Mammary epithelial cell (primary cell): ENCODE measurements at regions of chr1 and their contacts with region 1.

Region 1: GRCh38 chr1:212035123-212035834 is at the starts of genes DTL and INTS7:
- DNase-seq: peak; percentile 99
- H3K4me3 ChIP-seq: peak within 1 kb of the TSS; percentile 89 to 98 (median 95)
- H3K27ac ChIP-seq: peak within 1 kb of the TSS; percentile 86
- H3K4me1 ChIP-seq: peaks cover 30% of the 10 kb centered on the region
- H3K27me3 ChIP-seq: no peaks in the 10 kb centered on the region
- CTCF ChIP-seq: peak; percentile 77 to 84
- total RNA-seq, gene DTL: 3.2 to 24.6 TPM
- total RNA-seq, gene INTS7: 16.8 to 24.3 TPM

Region 2: DNA sequence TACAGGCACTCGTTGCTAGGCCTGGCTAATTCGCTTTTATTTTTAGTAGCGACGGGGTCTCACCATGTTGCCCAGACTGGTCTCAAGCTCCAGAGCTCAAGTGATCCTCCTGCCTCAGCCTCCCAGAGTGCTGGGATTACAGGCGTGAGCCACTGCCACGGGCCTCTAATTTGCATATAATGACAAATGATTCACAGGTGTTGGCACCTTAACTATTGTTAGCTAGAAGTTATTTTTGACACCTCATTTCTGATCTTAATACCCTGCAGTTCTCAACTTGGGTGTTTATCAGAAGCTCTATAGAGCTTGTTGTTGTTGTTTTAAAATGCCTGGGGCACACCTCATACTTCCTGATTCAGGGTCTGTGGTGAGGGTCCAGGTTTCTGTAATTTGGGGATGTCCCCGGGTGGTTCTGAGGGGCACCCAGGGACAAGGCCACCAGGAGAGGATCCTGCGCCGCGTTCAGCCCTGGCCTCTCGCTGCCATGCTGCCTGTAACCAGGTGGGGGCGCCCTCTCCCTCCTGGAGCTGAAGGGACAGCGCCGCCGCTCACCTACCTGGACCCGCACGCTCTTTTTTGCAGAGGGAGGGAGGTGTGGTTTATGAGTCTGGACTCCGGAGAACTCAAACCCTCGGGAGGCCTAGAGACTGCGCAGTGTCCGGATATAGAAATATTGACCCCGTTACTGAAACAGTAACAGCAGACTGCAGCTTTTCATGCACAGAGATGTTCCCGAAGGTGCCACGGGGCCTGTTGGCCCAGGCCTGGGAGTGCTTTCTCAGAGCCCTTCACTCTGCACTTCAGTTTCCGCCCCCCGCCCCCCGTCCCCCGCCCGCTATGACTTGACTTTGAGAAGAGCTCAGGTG is 336.9 kb before region 1 on chr1:
- CTCF ChIA-PET with region 1: no interaction called
- dilution Hi-C with region 1: no loop called
- in situ Hi-C with region 1: loop called in 1 of 2 experiments (anchors 25 kb)
- intact Hi-C with region 1: loop called (anchors 1 kb)
- DNase-seq: peak; percentile 64
- H3K4me3 ChIP-seq: no peak overlapping the region
- H3K27ac ChIP-seq: no peak overlapping the region
- H3K4me1 ChIP-seq: peaks cover 5% of the 10 kb centered on the region
- H3K27me3 ChIP-seq: no peaks in the 10 kb centered on the region
- CTCF ChIP-seq: peak; percentile 91 to 99

Region 3: GRCh38 chr1:211830330-211831142 is 204.7 kb before region 1 on chr1 and contains the start of gene LPGAT1:
- CTCF ChIA-PET with region 1: interaction called, 5 read pairs
- dilution Hi-C with region 1: no loop called
- in situ Hi-C with region 1: no loop called
- intact Hi-C with region 1: loop called (anchors 1 kb)
- DNase-seq: peak; percentile 53
- H3K4me3 ChIP-seq: peak within 1 kb of the TSS; percentile 69 to 84 (median 75)
- H3K27ac ChIP-seq: peak within 1 kb of the TSS; percentile 44
- H3K4me1 ChIP-seq: peaks cover 15% of the 10 kb centered on the region
- H3K27me3 ChIP-seq: no peaks in the 10 kb centered on the region
- CTCF ChIP-seq: peak; percentile 19 to 59
- total RNA-seq, gene LPGAT1: 42.0 to 44.5 TPM

Region 4: GRCh38 chr1:211951856-211952255 is 83.4 kb before region 1 on chr1:
- CTCF ChIA-PET with region 1: no interaction called
- dilution Hi-C with region 1: no loop called
- in situ Hi-C with region 1: no loop called
- intact Hi-C with region 1: loop called (anchors 5 kb)
- DNase-seq: peak; percentile 95
- H3K4me3 ChIP-seq: no peak overlapping the region
- H3K27ac ChIP-seq: peak overlapping the region; percentile 70
- H3K4me1 ChIP-seq: peaks cover 18% of the 10 kb centered on the region
- H3K27me3 ChIP-seq: no peaks in the 10 kb centered on the region
- CTCF ChIP-seq: no peak

Region 5: GRCh38 chr1:212595787-212596714 is 560.8 kb after region 1 on chr1:
- CTCF ChIA-PET with region 1: no interaction called
- dilution Hi-C with region 1: no loop called
- in situ Hi-C with region 1: no loop called
- intact Hi-C with region 1: loop called (anchors 1 kb)
- DNase-seq: peak; percentile 98
- H3K4me3 ChIP-seq: peak overlapping the region; percentile 2 to 7 (median 5)
- H3K27ac ChIP-seq: peak overlapping the region; percentile 95
- H3K4me1 ChIP-seq: peaks cover 27% of the 10 kb centered on the region
- H3K27me3 ChIP-seq: no peaks in the 10 kb centered on the region
- CTCF ChIP-seq: peak; percentile 75 to 81